ENCODE measurements at regions of chr1 and their contacts with region 1.

Region 1: GRCh38 chr1:21511579-21512522 is 2.6 kb downstream of the ALPL start:
- DNase-seq: no peak
- ATAC-seq: peak in 2 of 4 donors; percentile 10 to 12
- H3K4me3 ChIP-seq: no peak overlapping the region
- H3K27ac ChIP-seq: no peak overlapping the region
- H3K4me1 ChIP-seq: peaks cover 0 to 7% (median 0%) of the 10 kb centered on the region in 4 donors
- H3K27me3 ChIP-seq: peaks cover 0 to 7% of the 10 kb centered on the region in 2 donors
- CTCF ChIP-seq: no peak
- POLR2A ChIP-seq: no peak

Region 2: DNA sequence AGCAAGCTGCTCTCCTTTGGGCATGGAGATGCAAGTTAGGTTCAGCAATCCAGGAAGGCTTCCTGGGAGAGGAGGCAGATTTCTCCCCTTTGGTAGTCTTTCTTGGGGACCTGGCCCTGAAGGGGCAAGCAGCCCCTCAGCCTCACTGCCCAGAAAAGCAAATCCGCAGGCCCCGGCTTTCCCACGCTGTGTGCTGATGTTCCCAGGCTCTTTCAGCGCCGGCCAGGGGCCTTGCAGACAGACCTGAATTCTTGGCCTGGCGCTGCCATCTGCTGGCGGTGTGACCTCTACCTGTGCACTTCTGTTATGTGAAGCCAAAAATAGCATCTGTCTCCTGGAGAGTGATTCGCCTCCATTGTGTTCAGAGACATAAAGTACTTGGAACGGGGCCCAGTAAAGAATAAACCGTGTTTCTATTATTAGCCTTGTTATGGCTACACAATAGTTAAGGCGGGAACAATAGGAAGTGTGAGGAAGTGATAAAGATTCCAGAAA is 62.2 kb after region 1 on chr1:
- intact Hi-C with region 1: loop called (anchors 5 to 10 kb)
- DNase-seq: peak; percentile 79 to 83 (median 82)
- ATAC-seq: peak; percentile 66 to 74 (median 71)
- H3K4me3 ChIP-seq: no peak overlapping the region
- H3K27ac ChIP-seq: no peak overlapping the region
- H3K4me1 ChIP-seq: peaks cover 0 to 18% (median 6%) of the 10 kb centered on the region in 4 donors
- H3K27me3 ChIP-seq: no peaks in the 10 kb centered on the region
- CTCF ChIP-seq: peak; percentile 54 to 72 (median 61)
- POLR2A ChIP-seq: no peak

Region 3: DNA sequence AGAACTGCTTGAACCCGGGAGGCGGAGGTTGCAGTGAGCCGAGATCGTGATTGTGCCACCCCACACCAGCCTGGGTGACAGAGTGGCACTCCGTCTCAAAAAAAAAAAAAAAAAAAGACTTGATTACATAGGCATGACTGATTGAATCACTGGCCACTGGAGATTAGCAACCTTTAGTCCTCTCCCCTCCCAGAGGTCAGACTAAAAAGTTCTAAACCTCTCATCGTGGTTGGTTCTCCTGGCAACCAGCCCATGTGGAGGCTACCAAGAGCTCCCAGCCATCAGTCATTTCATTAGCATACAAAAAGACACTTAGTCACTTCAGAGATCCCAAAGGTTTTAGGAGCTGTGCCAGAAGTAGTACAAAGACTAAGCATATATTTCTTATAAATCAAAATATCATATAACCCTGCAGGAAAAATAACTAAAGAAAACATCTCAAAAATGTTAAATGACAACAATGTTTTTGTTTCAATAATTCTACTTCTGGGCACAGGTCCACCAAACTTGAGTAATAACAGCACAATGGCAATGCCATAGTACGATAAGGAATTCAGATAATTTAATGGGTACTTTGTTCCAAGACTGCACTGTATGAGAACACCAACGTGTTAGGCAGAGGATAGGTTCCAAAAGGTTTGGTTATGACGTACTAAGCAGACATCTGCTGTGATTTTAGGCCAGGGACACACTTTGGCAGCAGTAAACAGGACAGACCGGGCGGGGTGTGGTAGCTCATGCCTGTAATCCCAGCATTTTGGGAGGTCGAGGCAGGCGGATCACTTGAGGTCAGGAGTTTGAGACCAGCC is 253.0 kb after region 1 on chr1:
- intact Hi-C with region 1: no loop called
- DNase-seq: peak in 2 of 3 donors; percentile 59
- ATAC-seq: peak; percentile 56 to 80 (median 70)
- H3K4me3 ChIP-seq: no peak overlapping the region
- H3K27ac ChIP-seq: no peak overlapping the region
- H3K4me1 ChIP-seq: no peaks in the 10 kb centered on the region
- H3K27me3 ChIP-seq: no peaks in the 10 kb centered on the region
- CTCF ChIP-seq: no peak
- POLR2A ChIP-seq: no peak